HCT116 (cell line): ENCODE measurements at regions of chr12 and their contacts with region 1.

Region 1: GRCh38 chr12:98503592-98504367 is 11.6 kb upstream of the TMPO start:
- DNase-seq: peak; percentile 89
- ATAC-seq: peak; percentile 65
- H3K4me3 ChIP-seq: peak overlapping the region; percentile 48 to 56
- H3K27ac ChIP-seq: peak overlapping the region; percentile 63
- H3K4me1 ChIP-seq: peaks cover 32 to 58% of the 10 kb centered on the region in 2 experiments; a peak in 3 of 4 replicates
- H3K27me3 ChIP-seq: no peaks in the 10 kb centered on the region
- CTCF ChIP-seq: no peak
- POLR2A ChIP-seq: peak; percentile 56
- RAD21 ChIP-seq: no peak

Region 2: GRCh38 chr12:98490501-98491453 is 13.0 kb before region 1 on chr12:
- CTCF ChIA-PET with region 1: interaction called, 18 read pairs
- POLR2A ChIA-PET with region 1: interaction called, 4 read pairs
- RAD21 ChIA-PET with region 1: no interaction called
- intact Hi-C with region 1: no loop called
- DNase-seq: peak; percentile 81
- ATAC-seq: peak; percentile 87
- H3K4me3 ChIP-seq: peak overlapping the region in 1 of 2 experiments; percentile 1; a peak in 1 of 4 replicates
- H3K27ac ChIP-seq: peak overlapping the region; percentile 57; the same call in 1 of the 2 replicates
- H3K4me1 ChIP-seq: peaks cover 21 to 27% of the 10 kb centered on the region in 2 experiments
- H3K27me3 ChIP-seq: no peaks in the 10 kb centered on the region
- CTCF ChIP-seq: peak; percentile 86 to 94 (median 88)
- POLR2A ChIP-seq: no peak
- RAD21 ChIP-seq: peak; percentile 82

Region 3: GRCh38 chr12:98516184-98516873 is 12.5 kb after region 1 on chr12:
- CTCF ChIA-PET with region 1: no interaction called
- POLR2A ChIA-PET with region 1: interaction called, 5 read pairs
- RAD21 ChIA-PET with region 1: no interaction called
- intact Hi-C with region 1: loop called (anchors 1 kb)
- DNase-seq: peak; percentile 74
- ATAC-seq: peak; percentile 60
- H3K4me3 ChIP-seq: peak overlapping the region; percentile 75 to 85
- H3K27ac ChIP-seq: peak overlapping the region; percentile 98
- H3K4me1 ChIP-seq: peaks cover 8 to 18% of the 10 kb centered on the region in 2 experiments
- H3K27me3 ChIP-seq: no peaks in the 10 kb centered on the region
- CTCF ChIP-seq: peak; percentile 58 to 82 (median 73)
- POLR2A ChIP-seq: no peak
- RAD21 ChIP-seq: peak; percentile 89

Region 4: DNA sequence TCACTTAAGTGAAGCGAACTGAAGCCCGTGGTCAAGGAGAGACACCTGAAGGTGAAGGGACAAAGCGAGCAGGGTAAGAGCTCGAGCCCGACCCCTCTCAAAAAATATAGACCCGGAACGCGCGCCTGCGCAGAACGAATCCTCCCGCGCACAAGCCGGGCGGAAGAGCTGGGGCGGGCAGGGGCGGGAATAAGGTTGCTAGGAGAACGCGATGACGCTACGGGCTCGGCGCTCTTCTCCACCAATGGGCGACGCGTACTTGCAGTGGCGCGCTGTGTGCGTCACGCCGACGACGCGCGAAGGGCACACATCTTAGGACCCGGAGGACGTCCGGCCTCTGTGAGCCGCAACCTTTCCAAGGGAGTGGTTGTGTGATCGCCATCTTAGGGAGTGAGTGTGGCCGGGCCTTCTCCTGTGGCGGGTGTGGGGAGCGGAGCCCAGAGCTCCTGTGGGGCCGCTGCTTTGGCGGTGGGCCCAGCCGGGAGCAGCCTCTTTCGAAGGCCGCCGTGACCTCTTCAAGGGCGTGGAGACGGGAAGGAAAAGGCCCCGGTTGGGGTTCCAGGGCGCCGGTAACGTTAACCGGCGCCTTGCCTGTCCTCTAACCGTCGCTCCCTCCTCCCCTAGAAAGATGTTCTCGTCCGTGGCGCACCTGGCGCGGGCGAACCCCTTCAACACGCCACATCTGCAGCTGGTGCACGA is 89.7 kb after region 1 on chr12 and contains the start of gene SLC25A3:
- CTCF ChIA-PET with region 1: no interaction called
- POLR2A ChIA-PET with region 1: interaction called, 3 read pairs
- RAD21 ChIA-PET with region 1: no interaction called
- intact Hi-C with region 1: loop called (anchors 5 kb)
- DNase-seq: peak; percentile 96
- ATAC-seq: peak; percentile 96
- H3K4me3 ChIP-seq: peak within 1 kb of the TSS; percentile 99 to 100
- H3K27ac ChIP-seq: peak within 1 kb of the TSS; percentile 91
- H3K4me1 ChIP-seq: peaks cover 15 to 26% of the 10 kb centered on the region in 2 experiments
- H3K27me3 ChIP-seq: no peaks in the 10 kb centered on the region
- CTCF ChIP-seq: no peak
- POLR2A ChIP-seq: peak; percentile 97
- RAD21 ChIP-seq: no peak
- total RNA-seq, gene SLC25A3: 927 TPM

Region 5: DNA sequence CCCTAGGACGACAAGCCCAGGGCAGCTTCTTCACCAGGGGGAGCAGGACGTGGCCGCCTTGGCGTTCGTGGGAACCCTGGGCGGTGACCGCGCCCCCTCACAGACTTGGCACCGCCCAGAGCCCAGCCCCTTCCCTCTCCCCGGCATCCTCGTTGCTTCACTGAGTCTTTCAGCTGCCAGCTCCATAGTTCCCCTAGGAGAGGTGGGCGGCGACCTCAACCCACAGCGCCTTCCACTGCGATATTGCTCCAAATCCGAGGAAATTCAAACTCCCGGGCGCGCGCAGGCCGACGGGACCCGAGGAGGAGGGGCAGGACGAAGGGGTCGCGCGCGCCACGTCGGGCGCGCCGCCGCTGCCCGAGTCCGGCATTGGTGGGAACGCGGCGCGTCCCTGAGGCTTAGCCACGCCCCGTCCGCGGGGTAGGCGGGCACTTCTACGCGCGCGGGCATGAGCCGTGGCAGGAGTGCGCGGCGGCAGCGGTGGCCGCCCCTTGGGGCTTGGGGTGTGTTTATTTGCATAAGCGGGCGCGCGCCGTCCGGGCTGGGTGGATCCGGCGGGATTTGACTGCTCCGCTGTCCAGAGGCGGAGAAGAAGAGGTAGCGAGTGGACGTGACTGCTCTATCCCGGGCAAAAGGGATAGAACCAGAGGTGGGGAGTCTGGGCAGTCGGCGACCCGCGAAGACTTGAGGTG is 141.1 kb after region 1 on chr12 and contains the starts of genes APAF1 and IKBIP:
- CTCF ChIA-PET with region 1: no interaction called
- POLR2A ChIA-PET with region 1: no interaction called
- RAD21 ChIA-PET with region 1: no interaction called
- intact Hi-C with region 1: loop called (anchors 1 kb)
- DNase-seq: peak; percentile 86
- ATAC-seq: peak; percentile 89
- H3K4me3 ChIP-seq: peak within 1 kb of the TSS; percentile 68 to 91
- H3K27ac ChIP-seq: peak within 1 kb of the TSS; percentile 88
- H3K4me1 ChIP-seq: peaks cover 2 to 17% of the 10 kb centered on the region in 2 experiments; a peak in 3 of 4 replicates
- H3K27me3 ChIP-seq: no peaks in the 10 kb centered on the region
- CTCF ChIP-seq: no peak
- POLR2A ChIP-seq: peak; percentile 66
- RAD21 ChIP-seq: no peak
- total RNA-seq, gene APAF1: 13.9 TPM
- total RNA-seq, gene IKBIP: 14.5 TPM